ENCODE measurements at regions of chr6 and their contacts with region 1.

Region 1: GRCh38 chr6:18302561-18303439 is 38.5 kb upstream of the DEK start:
- DNase-seq: no peak
- ATAC-seq: no peak

Region 2: DNA sequence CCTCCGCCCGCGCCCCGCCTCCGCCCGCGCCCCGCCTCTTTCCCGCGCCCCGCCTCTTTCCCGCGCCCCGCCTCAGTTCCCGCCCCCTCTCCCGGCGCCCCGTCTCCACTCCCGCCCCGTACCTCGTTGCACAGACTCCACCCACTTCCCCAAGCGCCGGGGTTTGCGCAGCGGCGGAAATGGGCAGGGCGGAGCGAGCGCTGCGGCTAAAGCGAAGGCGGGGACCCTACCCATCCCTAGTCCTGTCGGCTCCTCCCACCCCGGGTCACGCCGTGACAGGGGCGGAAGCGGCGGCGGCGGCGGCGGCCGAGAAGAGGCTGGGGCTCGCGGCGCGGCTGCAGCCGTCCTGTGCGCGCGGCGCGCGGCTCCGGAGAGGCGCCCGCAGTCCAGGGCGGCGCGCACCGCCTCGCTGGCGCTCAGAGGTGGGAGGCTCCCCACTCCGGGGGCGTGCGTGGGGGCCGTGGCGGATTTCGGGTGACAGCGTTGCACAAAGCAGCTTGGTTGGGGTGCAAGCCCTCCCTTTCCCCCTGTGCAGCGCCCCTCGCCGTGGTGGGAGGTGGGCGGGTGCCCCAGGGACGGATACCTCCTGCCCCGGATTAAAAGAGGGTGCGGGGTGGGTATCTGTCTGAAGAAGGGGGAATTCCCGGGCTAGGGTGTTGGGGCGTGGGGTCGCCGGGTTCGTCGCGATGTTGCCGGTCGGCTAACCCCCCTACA is 147.5 kb before region 1 on chr6 and contains the start of gene KDM1B:
- intact Hi-C with region 1: loop called (anchors 5 kb)
- DNase-seq: peak; percentile 99
- ATAC-seq: peak; percentile 99
- total RNA-seq, gene KDM1B: 13.0 TPM

Region 3: DNA sequence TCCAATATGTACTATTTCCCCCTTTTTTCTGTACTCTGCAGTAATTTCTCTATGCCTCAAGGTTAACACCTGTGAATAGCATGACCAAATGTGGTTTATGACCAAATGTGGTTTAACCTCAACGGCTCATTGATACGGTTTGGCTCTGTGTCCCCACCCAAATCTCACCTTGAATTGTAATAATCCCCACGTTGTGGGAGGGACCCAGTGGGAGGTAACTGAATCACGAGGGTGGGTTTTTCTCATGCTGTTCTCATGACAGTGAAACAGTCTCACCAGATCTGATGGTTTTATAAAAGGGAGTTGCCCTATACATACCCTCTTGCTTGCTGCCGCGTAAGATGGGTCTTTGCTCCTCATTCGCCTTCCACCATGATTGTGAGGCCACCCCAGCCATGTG is 57.2 kb before region 1 on chr6:
- intact Hi-C with region 1: no loop called
- DNase-seq: no peak
- ATAC-seq: no peak

Measured in Right ventricle myocardium inferior (tissue), 1 donor.